T-cell (primary cell): ENCODE measurements at regions of chr17 and their contacts with region 1.

Region 1: DNA sequence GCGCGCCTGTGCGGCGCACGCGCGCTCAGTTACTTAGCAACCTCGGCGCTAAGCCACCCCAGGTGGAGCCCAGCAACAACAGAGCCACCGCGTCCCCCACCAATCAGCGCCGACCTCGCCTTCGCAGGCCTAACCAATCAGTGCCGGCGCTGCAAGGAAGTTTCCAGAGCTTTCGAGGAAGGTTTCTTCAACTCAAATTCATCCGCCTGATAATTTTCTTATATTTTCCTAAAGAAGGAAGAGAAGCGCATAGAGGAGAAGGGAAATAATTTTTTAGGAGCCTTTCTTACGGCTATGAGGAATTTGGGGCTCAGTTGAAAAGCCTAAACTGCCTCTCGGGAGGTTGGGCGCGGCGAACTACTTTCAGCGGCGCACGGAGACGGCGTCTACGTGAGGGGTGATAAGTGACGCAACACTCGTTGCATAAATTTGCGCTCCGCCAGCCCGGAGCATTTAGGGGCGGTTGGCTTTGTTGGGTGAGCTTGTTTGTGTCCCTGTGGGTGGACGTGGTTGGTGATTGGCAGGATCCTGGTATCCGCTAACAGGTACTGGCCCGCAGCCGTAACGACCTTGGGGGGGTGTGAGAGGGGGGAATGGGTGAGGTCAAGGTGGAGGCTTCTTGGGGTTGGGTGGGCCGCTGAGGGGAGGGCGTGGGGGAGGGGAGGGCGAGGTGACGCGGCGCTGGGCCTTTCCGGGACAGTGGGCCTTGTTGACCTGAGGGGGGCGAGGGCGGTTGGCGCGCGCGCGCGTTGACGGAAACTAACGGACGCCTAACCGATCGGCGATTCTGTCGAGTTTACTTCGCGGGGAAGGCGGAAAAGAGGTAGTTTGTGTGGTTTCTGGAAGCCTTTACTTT is at the start of gene UBB:
- DNase-seq: peak; percentile 86 to 97 (median 94)
- ATAC-seq: peak; percentile 95 to 97 (median 96)
- H3K4me3 ChIP-seq: peak within 1 kb of the TSS; percentile 74 to 80
- H3K4me3 Mint-ChIP-seq: peak within 1 kb of the TSS; percentile 89 to 92 (median 91)
- H3K27ac ChIP-seq: peak within 1 kb of the TSS; percentile 95
- H3K27ac Mint-ChIP-seq: peak within 1 kb of the TSS; percentile 95 to 97
- H3K4me1 ChIP-seq: peaks cover 7 to 28% of the 10 kb centered on the region in 2 experiments
- H3K4me1 Mint-ChIP-seq: peaks cover 38 to 45% (median 45%) of the 10 kb centered on the region in 3 donors
- H3K27me3 ChIP-seq: no peaks in the 10 kb centered on the region
- H3K27me3 Mint-ChIP-seq: no peaks in the 10 kb centered on the region
- total RNA-seq, gene UBB: 669 to 892 (median 718) TPM

Region 2: DNA sequence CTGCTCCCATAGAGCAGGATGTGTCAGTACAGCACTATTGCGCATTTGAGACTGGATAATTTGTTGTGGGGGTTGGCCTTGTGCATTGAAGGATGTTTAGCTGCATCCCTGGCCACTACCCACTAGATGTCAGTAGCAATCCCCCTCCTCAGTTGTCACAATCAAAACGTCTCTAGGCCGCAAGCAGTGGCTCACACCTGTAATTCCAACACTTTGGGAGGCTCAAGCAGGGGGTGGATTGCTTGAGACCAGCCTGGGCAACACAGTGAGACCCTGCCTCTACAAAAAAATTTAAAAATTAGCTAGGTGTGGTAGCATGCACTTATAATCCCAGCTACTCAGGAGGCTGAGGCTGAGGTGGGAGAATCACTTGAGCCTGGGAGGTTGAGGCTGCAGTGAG is 76.0 kb before region 1 on chr17:
- CTCF ChIA-PET with region 1: interaction called in 1 of 2 experiments, 10 read pairs
- POLR2A ChIA-PET with region 1: no interaction called
- DNase-seq: peak in 7 of 35 experiments; percentile 4 to 41 (median 7)
- ATAC-seq: peak in 2 of 4 experiments; percentile 33 to 68
- H3K4me3 ChIP-seq: no peak overlapping the region
- H3K4me3 Mint-ChIP-seq: no peak overlapping the region
- H3K27ac ChIP-seq: no peak overlapping the region
- H3K27ac Mint-ChIP-seq: no peak overlapping the region
- H3K4me1 ChIP-seq: no peaks in the 10 kb centered on the region
- H3K4me1 Mint-ChIP-seq: peaks cover 3 to 10% (median 4%) of the 10 kb centered on the region in 3 donors
- H3K27me3 ChIP-seq: no peaks in the 10 kb centered on the region
- H3K27me3 Mint-ChIP-seq: no peaks in the 10 kb centered on the region

Region 3: GRCh38 chr17:16406742-16407674 is 26.1 kb after region 1 on chr17:
- CTCF ChIA-PET with region 1: no interaction called
- POLR2A ChIA-PET with region 1: interaction called in 1 of 2 experiments, 10 read pairs
- DNase-seq: peak in 1 of 35 experiments; percentile 11
- ATAC-seq: peak in 3 of 4 experiments; percentile 23 to 47 (median 45)
- H3K4me3 ChIP-seq: peak overlapping the region; percentile 52 to 77
- H3K4me3 Mint-ChIP-seq: peak overlapping the region; percentile 43 to 64 (median 60)
- H3K27ac ChIP-seq: no peak overlapping the region
- H3K27ac Mint-ChIP-seq: no peak overlapping the region
- H3K4me1 ChIP-seq: peaks cover 0 to 12% of the 10 kb centered on the region in 2 experiments
- H3K4me1 Mint-ChIP-seq: peaks cover 3 to 11% (median 8%) of the 10 kb centered on the region in 3 donors
- H3K27me3 ChIP-seq: peaks cover 0 to 43% of the 10 kb centered on the region in 2 experiments
- H3K27me3 Mint-ChIP-seq: peaks cover 4 to 13% of the 10 kb centered on the region in 2 donors

Region 4: DNA sequence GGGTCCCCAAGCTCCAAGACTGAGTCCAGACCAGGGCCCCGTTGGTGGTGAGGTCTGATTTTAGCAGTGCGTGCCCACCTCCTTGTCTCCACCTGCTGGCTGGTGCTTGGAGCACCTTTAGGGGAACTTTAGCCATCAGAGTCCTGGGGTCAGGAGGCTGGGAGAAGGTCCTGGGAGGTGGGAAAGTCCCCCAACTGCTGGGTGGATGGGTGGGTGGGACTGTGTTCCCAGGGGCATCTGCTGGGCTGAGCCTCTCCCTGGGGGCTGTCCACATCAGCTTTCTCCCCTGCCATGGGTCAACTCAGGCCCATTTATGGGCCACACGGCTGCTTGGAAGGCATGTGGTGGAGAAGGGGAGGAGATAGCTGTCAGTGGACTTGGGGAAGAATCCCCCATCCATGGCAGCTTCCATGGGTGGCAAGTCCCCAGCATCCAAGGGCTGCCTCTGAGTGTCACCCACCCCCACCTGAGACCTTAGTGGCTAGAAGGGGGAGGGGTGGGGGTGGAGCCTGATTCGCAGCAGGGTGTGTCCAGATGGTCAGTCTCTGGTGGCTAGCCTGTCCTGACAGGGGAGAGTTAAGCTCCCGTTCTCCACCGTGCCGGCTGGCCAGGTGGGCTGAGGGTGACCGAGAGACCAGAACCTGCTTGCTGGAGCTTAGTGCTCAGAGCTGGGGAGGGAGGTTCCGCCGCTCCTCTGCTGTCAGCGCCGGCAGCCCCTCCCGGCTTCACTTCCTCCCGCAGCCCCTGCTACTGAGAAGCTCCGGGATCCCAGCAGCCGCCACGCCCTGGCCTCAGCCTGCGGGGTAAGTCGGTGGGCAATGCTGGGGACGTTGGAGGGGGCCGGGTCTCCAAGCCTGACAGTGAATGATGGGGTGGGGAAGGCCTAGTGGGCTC is 34.4 kb after region 1 on chr17 and contains the start of gene TRPV2:
- CTCF ChIA-PET with region 1: interaction called, 7 to 10 read pairs
- POLR2A ChIA-PET with region 1: interaction called, 5 to 14 read pairs
- DNase-seq: peak in 34 of 35 experiments; percentile 24 to 69 (median 42)
- ATAC-seq: peak; percentile 48 to 75 (median 68)
- H3K4me3 ChIP-seq: peak within 1 kb of the TSS; percentile 86 to 92
- H3K4me3 Mint-ChIP-seq: peak within 1 kb of the TSS; percentile 90 to 98 (median 95)
- H3K27ac ChIP-seq: peak within 1 kb of the TSS; percentile 88
- H3K27ac Mint-ChIP-seq: peak within 1 kb of the TSS; percentile 99
- H3K4me1 ChIP-seq: peaks cover 8 to 60% of the 10 kb centered on the region in 2 experiments
- H3K4me1 Mint-ChIP-seq: peaks cover 45 to 52% (median 50%) of the 10 kb centered on the region in 3 donors
- H3K27me3 ChIP-seq: no peaks in the 10 kb centered on the region
- H3K27me3 Mint-ChIP-seq: no peaks in the 10 kb centered on the region
- total RNA-seq, gene TRPV2: 91.3 to 127 (median 122) TPM

Region 5: GRCh38 chr17:16438557-16439302 is 57.9 kb after region 1 on chr17:
- CTCF ChIA-PET with region 1: interaction called in 1 of 2 experiments, 5 read pairs
- POLR2A ChIA-PET with region 1: interaction called, 3 to 19 read pairs
- DNase-seq: peak; percentile 81 to 97 (median 92)
- ATAC-seq: peak; percentile 85 to 88 (median 87)
- H3K4me3 ChIP-seq: peak overlapping the region; percentile 68 to 90
- H3K4me3 Mint-ChIP-seq: peak overlapping the region; percentile 97 to 100 (median 97)
- H3K27ac ChIP-seq: peak overlapping the region; percentile 82
- H3K27ac Mint-ChIP-seq: peak overlapping the region; percentile 97 to 98
- H3K4me1 ChIP-seq: peaks cover 19 to 41% of the 10 kb centered on the region in 2 experiments
- H3K4me1 Mint-ChIP-seq: peaks cover 44 to 55% (median 52%) of the 10 kb centered on the region in 3 donors
- H3K27me3 ChIP-seq: no peaks in the 10 kb centered on the region
- H3K27me3 Mint-ChIP-seq: no peaks in the 10 kb centered on the region

Region 6: GRCh38 chr17:16449121-16449570 is 68.3 kb after region 1 on chr17:
- CTCF ChIA-PET with region 1: no interaction called
- POLR2A ChIA-PET with region 1: no interaction called
- DNase-seq: no peak
- ATAC-seq: no peak
- H3K4me3 ChIP-seq: no peak overlapping the region
- H3K4me3 Mint-ChIP-seq: no peak overlapping the region
- H3K27ac ChIP-seq: no peak overlapping the region
- H3K27ac Mint-ChIP-seq: no peak overlapping the region
- H3K4me1 ChIP-seq: peaks cover 0 to 8% of the 10 kb centered on the region in 2 experiments
- H3K4me1 Mint-ChIP-seq: peaks cover 11 to 13% (median 12%) of the 10 kb centered on the region in 3 donors
- H3K27me3 ChIP-seq: no peaks in the 10 kb centered on the region
- H3K27me3 Mint-ChIP-seq: no peaks in the 10 kb centered on the region